ENCODE measurements at regions of chr1 and their contacts with region 1.

Region 1: DNA sequence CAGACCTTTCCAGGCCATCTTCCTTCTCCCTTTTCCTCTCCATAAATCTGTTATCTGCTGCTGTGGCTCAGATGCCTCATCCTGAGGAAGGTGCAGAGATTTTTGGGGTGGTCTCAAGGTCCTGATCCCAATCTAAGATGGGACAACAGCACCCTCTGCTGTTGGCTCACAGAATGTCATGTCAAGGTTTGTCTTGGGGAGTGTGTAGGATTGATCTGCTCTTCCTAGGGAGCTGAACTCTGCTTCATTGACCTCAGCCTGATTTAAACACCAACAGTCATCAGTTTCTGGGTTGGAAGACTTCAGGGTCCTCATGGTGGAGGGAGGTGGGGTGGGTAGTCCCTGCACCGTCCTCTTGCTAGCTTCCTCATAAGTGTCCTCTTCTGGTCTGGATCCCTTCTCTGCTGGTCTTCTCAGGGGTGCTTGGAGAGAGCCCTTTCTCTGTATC is 62.8 kb upstream of the LAX1 start:
- DNase-seq: peak; percentile 72
- H3K4me3 Mint-ChIP-seq: no peak overlapping the region
- H3K27ac Mint-ChIP-seq: peak overlapping the region; percentile 78
- H3K4me1 Mint-ChIP-seq: peaks cover 23% of the 10 kb centered on the region
- H3K27me3 Mint-ChIP-seq: no peaks in the 10 kb centered on the region

Region 2: GRCh38 chr1:203390298-203390697 is 311.9 kb before region 1 on chr1:
- CTCF ChIA-PET with region 1: no interaction called
- DNase-seq: no peak
- H3K4me3 Mint-ChIP-seq: no peak overlapping the region
- H3K27ac Mint-ChIP-seq: no peak overlapping the region
- H3K4me1 Mint-ChIP-seq: no peaks in the 10 kb centered on the region
- H3K27me3 Mint-ChIP-seq: peaks cover 19% of the 10 kb centered on the region

Region 3: GRCh38 chr1:203486618-203487370 is 215.4 kb before region 1 on chr1:
- CTCF ChIA-PET with region 1: interaction called, 12 read pairs
- DNase-seq: no peak
- H3K4me3 Mint-ChIP-seq: peak overlapping the region; percentile 61
- H3K27ac Mint-ChIP-seq: no peak overlapping the region
- H3K4me1 Mint-ChIP-seq: peaks cover 6% of the 10 kb centered on the region
- H3K27me3 Mint-ChIP-seq: peaks cover 16% of the 10 kb centered on the region

Region 4: GRCh38 chr1:203593723-203594122 is 108.4 kb before region 1 on chr1:
- CTCF ChIA-PET with region 1: interaction called, 55 read pairs
- DNase-seq: peak; percentile 71
- H3K4me3 Mint-ChIP-seq: no peak overlapping the region
- H3K27ac Mint-ChIP-seq: no peak overlapping the region
- H3K4me1 Mint-ChIP-seq: peaks cover 17% of the 10 kb centered on the region
- H3K27me3 Mint-ChIP-seq: peaks cover 40% of the 10 kb centered on the region

Region 5: DNA sequence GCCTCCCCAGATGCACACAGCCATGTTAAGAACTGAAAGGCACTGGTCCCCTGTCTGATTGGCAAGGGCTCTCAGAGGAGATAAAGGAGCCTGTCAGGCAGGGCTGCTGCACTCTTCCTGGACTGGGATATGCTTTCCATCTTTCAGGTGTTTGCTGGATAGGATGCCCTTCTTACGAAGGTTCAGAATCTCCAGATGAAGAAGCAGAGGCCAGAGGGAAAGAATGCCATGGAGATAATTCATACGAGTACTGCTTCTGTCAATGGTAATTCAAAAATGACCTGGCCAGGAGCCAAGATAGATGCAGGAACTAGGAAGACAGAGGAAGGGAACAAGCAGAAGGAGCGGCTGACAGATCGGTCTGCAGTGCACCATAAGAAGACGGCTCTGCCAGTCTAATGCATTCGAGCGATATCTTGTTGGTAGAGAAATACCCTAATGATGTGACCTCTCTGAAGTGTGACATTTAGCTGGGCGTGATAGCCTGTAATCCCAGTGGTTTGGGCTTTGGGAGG is 92.1 kb before region 1 on chr1:
- CTCF ChIA-PET with region 1: interaction called, 29 read pairs
- DNase-seq: no peak
- H3K4me3 Mint-ChIP-seq: no peak overlapping the region
- H3K27ac Mint-ChIP-seq: no peak overlapping the region
- H3K4me1 Mint-ChIP-seq: peaks cover 77% of the 10 kb centered on the region
- H3K27me3 Mint-ChIP-seq: no peaks in the 10 kb centered on the region

Region 6: GRCh38 chr1:203673550-203674427 is 28.4 kb before region 1 on chr1:
- CTCF ChIA-PET with region 1: interaction called, 49 read pairs
- DNase-seq: peak; percentile 82
- H3K4me3 Mint-ChIP-seq: peak overlapping the region; percentile 49
- H3K27ac Mint-ChIP-seq: peak overlapping the region; percentile 95
- H3K4me1 Mint-ChIP-seq: peaks cover 58% of the 10 kb centered on the region
- H3K27me3 Mint-ChIP-seq: no peaks in the 10 kb centered on the region

Region 7: GRCh38 chr1:203713125-203713524 is 11.0 kb after region 1 on chr1:
- CTCF ChIA-PET with region 1: interaction called, 13 read pairs
- DNase-seq: no peak
- H3K4me3 Mint-ChIP-seq: no peak overlapping the region
- H3K27ac Mint-ChIP-seq: no peak overlapping the region
- H3K4me1 Mint-ChIP-seq: no peaks in the 10 kb centered on the region
- H3K27me3 Mint-ChIP-seq: no peaks in the 10 kb centered on the region

Measured in activated naive CD4-positive, alpha-beta T cell treated with anti-CD3 and anti-CD28 coated beads, Interleukin-2, amount 10 ng/mL, durations not matched to agents 7 days and 5 days (primary cell).